ENCODE measurements at regions of chr14 and their contacts with region 1.

Region 1: DNA sequence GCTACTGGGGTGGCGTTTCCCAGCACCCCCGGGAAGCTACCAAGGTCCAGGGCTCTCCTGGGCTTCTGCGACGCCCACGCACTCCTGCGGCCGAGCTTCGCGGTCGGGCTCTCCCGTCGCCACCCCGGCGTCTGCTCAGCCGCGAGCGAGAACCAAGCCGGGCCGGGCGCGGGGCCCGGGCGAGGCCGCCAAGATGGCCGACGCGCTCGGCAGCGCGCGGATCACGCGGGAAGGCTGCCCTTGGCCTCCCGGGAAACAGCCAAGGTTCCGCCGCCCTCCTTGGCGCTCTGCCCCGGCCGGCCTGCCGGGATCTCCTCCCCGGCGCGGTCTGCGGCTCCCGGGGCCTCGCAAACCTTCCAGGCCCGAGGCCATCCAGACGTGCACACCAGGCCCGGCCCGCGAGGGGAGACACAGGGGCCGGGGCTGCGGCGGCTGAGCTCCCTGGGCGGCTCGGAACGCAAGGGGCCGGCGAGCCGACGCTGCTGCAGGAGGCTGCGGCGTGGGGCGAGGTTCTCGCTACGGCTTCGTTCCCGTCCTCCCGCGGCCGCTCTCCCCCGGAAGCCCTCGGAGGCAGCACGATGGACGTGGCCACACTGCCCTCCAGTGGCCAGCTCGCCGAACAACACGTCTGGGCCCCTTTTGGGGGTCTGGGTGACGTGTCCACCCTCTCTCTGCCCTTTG is 23.5 kb upstream of the ZFP36L1 start:
- DNase-seq: peak; percentile 63
- ATAC-seq: peak; percentile 76
- H3K4me3 ChIP-seq: peak overlapping the region in 2 of 3 experiments; percentile 47 to 66; a peak in 4 of 6 replicates
- H3K27ac ChIP-seq: peak overlapping the region; percentile 10
- H3K4me1 ChIP-seq: peaks cover 77% of the 10 kb centered on the region
- H3K27me3 ChIP-seq: no peaks in the 10 kb centered on the region
- CTCF ChIP-seq: peak; percentile 99
- EP300 ChIP-seq: no peak
- POLR2A ChIP-seq: no peak
- RAD21 ChIP-seq: peak; percentile 99

Region 2: DNA sequence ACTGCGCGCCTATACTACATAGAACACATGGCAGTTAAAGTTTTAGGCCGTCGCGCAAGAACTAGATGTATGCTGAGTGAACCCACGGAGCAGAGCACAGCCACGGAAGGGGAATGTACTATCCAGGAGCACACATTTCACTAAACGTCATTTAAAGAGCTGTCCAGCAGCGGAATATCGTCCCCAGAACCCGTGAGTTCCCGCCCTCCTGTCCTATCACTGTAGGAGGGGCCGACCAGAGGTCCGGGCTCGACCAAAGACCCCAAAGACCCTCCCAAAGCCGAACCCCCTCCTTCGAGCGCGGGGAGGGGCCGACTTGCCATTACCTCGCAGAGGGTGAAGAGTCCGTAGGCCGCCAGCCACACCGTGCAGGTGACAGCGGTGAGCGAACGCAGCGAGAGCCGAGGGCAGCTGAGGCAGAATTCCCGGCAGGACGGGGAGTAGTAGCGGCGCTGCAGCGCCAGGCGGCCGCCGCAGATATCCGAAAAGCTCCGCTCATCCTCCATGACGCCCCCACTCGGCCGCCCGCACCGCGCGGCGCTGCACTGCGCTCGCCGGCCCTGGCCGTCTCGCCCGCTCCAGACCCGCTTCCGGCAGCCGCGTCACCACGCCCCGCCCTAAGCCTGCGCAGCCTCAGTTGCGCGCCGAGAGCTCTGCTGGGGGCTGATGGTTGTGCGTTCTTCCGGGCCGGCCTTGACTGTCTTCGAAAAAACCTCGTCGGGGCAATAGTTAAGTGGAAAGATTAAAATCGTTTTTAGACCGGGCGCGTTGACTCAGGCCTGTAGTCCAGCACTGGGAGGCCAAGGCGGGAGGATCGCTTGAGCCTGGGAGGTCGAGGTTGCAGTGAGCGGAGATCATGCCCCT is 1216.5 kb before region 1 on chr14 and contains the start of gene PIGH:
- CTCF ChIA-PET with region 1: no interaction called
- POLR2A ChIA-PET with region 1: no interaction called
- in situ Hi-C with region 1: loop called (anchors 25 kb)
- intact Hi-C with region 1: no loop called
- DNase-seq: peak; percentile 83
- ATAC-seq: peak; percentile 97
- H3K4me3 ChIP-seq: peak within 1 kb of the TSS; percentile 82 to 89 (median 87)
- H3K27ac ChIP-seq: peak within 1 kb of the TSS; percentile 74
- H3K4me1 ChIP-seq: peaks cover 43% of the 10 kb centered on the region
- H3K27me3 ChIP-seq: no peaks in the 10 kb centered on the region; a peak in 1 of 5 replicates
- CTCF ChIP-seq: peak; percentile 76
- EP300 ChIP-seq: peak in 1 of 2 experiments; percentile 42; a peak in 1 of 4 replicates
- POLR2A ChIP-seq: peak; percentile 62 to 72
- RAD21 ChIP-seq: peak; percentile 83
- total RNA-seq, gene PIGH: 18.7 and 30.0 TPM in 2 replicates

Region 3: GRCh38 chr14:67934008-67934481 is 882.4 kb before region 1 on chr14:
- CTCF ChIA-PET with region 1: interaction called, 9 read pairs
- POLR2A ChIA-PET with region 1: no interaction called
- in situ Hi-C with region 1: loop called (anchors 5 kb)
- intact Hi-C with region 1: no loop called
- DNase-seq: peak; percentile 62
- ATAC-seq: peak; percentile 84
- H3K4me3 ChIP-seq: no peak overlapping the region
- H3K27ac ChIP-seq: no peak overlapping the region
- H3K4me1 ChIP-seq: no peaks in the 10 kb centered on the region
- H3K27me3 ChIP-seq: no peaks in the 10 kb centered on the region
- CTCF ChIP-seq: peak; percentile 67
- EP300 ChIP-seq: no peak
- POLR2A ChIP-seq: no peak
- RAD21 ChIP-seq: 0 out of 2 replicates have a peak, but pooled peaks have one; percentile 34

Region 4: GRCh38 chr14:67943947-67944346 is 872.5 kb before region 1 on chr14:
- CTCF ChIA-PET with region 1: no interaction called
- POLR2A ChIA-PET with region 1: no interaction called
- in situ Hi-C with region 1: no loop called
- intact Hi-C with region 1: loop called (anchors 1 kb)
- DNase-seq: peak; percentile 73
- ATAC-seq: peak; percentile 60; the same call in 2 of the 3 replicates
- H3K4me3 ChIP-seq: no peak overlapping the region
- H3K27ac ChIP-seq: no peak overlapping the region
- H3K4me1 ChIP-seq: peaks cover 42% of the 10 kb centered on the region
- H3K27me3 ChIP-seq: no peaks in the 10 kb centered on the region
- CTCF ChIP-seq: peak; percentile 80
- EP300 ChIP-seq: no peak
- POLR2A ChIP-seq: no peak
- RAD21 ChIP-seq: peak; percentile 73

Region 5: DNA sequence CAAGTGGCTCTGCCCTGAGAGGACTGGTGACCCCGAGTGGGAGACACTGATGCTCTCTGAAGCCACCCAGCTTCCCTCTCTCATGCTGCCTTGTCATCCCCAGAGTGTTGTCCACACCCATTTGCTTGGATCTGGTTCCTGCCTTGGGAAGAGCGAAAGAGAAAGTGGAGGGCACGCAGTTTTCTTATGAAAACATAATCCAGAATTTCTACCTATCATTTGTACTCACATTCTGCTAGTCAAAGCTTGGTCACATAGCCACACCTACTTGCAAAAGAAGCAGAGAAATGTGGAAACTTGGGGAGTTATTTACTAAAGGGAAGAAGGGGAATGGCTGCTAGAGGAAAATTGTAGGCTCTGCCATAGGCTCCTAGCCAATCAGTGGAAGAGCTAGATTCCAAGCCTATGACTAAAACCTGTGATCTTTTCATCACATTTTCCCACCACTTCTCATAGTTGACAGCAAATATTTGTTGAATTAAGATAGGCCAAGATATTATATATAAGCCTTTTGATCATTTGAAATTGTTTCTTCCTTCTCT is 349.8 kb before region 1 on chr14:
- CTCF ChIA-PET with region 1: no interaction called
- POLR2A ChIA-PET with region 1: interaction called, 3 read pairs
- in situ Hi-C with region 1: no loop called
- intact Hi-C with region 1: loop called (anchors 10 kb)
- DNase-seq: peak; percentile 63
- ATAC-seq: no peak
- H3K4me3 ChIP-seq: no peak overlapping the region
- H3K27ac ChIP-seq: no peak overlapping the region
- H3K4me1 ChIP-seq: peaks cover 48% of the 10 kb centered on the region
- H3K27me3 ChIP-seq: no peaks in the 10 kb centered on the region
- CTCF ChIP-seq: no peak
- EP300 ChIP-seq: no peak
- POLR2A ChIP-seq: no peak
- RAD21 ChIP-seq: no peak

Region 6: GRCh38 chr14:68718023-68718995 is 98.1 kb before region 1 on chr14:
- CTCF ChIA-PET with region 1: interaction called, 6 read pairs
- POLR2A ChIA-PET with region 1: interaction called, 15 read pairs
- in situ Hi-C with region 1: no loop called
- intact Hi-C with region 1: no loop called
- DNase-seq: no peak
- ATAC-seq: peak; percentile 54
- H3K4me3 ChIP-seq: no peak overlapping the region
- H3K27ac ChIP-seq: no peak overlapping the region
- H3K4me1 ChIP-seq: peaks cover 65% of the 10 kb centered on the region
- H3K27me3 ChIP-seq: no peaks in the 10 kb centered on the region
- CTCF ChIP-seq: no peak
- EP300 ChIP-seq: no peak
- POLR2A ChIP-seq: no peak
- RAD21 ChIP-seq: 0 out of 2 replicates have a peak, but pooled peaks have one; percentile 19